ENCODE measurements at regions of chr12 and their contacts with region 1.

Region 1: GRCh38 chr12:759628-760027 is 7.2 kb downstream of the WNK1 start:
- DNase-seq: no peak
- H3K4me3 ChIP-seq: no peak overlapping the region
- H3K27ac ChIP-seq: no peak overlapping the region
- H3K4me1 ChIP-seq: peaks cover 36% of the 10 kb centered on the region
- H3K27me3 ChIP-seq: no peaks in the 10 kb centered on the region
- CTCF ChIP-seq: no peak

Region 2: GRCh38 chr12:835754-836518 is 76.3 kb after region 1 on chr12:
- CTCF ChIA-PET with region 1: no interaction called
- POLR2A ChIA-PET with region 1: no interaction called
- intact Hi-C with region 1: no loop called
- DNase-seq: peak in 1 of 2 experiments; percentile 46
- H3K4me3 ChIP-seq: no peak overlapping the region
- H3K27ac ChIP-seq: 0 out of 2 replicates have a peak overlapping the region, but pooled peaks have one; percentile 2
- H3K4me1 ChIP-seq: no peaks in the 10 kb centered on the region
- H3K27me3 ChIP-seq: no peaks in the 10 kb centered on the region
- CTCF ChIP-seq: no peak

Region 3: DNA sequence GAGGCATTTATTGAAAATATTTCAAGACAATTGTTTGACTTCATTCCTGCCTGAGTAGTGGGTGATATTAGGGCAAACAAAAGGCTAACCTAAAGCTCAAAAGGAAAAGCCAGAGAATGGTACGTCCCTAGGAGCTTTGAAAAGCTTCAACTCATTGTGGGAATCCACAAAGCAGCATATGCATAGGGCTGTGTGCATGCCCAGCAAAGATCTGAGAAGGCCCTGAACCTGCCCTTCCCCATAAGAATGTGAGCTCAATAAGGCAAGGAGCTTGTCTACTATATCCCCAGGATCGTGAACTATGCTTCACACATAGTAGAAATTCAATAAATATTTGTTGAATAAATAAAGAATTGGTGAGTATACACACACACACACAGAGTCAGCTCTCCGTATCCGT is 208.9 kb after region 1 on chr12:
- CTCF ChIA-PET with region 1: no interaction called
- POLR2A ChIA-PET with region 1: no interaction called
- intact Hi-C with region 1: no loop called
- DNase-seq: no peak
- H3K4me3 ChIP-seq: no peak overlapping the region
- H3K27ac ChIP-seq: no peak overlapping the region
- H3K4me1 ChIP-seq: no peaks in the 10 kb centered on the region
- H3K27me3 ChIP-seq: no peaks in the 10 kb centered on the region
- CTCF ChIP-seq: no peak

Region 4: GRCh38 chr12:1197264-1198018 is 437.8 kb after region 1 on chr12:
- CTCF ChIA-PET with region 1: no interaction called
- POLR2A ChIA-PET with region 1: interaction called, 10 read pairs
- intact Hi-C with region 1: no loop called
- DNase-seq: peak; percentile 15 to 60
- H3K4me3 ChIP-seq: no peak overlapping the region
- H3K27ac ChIP-seq: peak overlapping the region; percentile 49
- H3K4me1 ChIP-seq: peaks cover 9% of the 10 kb centered on the region; the same call in 1 of the 2 replicates
- H3K27me3 ChIP-seq: no peaks in the 10 kb centered on the region
- CTCF ChIP-seq: no peak

Measured in PC-9 (cell line).